Activated CD4-positive, alpha-beta T cell treated with anti-CD3 and anti-CD28 coated beads, Interleukin-2, amount 10 ng/mL, durations not matched to agents 24 days and 14 days (primary cell): ENCODE measurements at regions of chr10 and their contacts with region 1.

Region 1: GRCh38 chr10:100998991-100999741 is 442 bp upstream of the LZTS2 start:
- DNase-seq: peak; percentile 95
- H3K4me3 Mint-ChIP-seq: peak overlapping the region; percentile 83
- H3K27ac Mint-ChIP-seq: peak overlapping the region; percentile 86
- H3K4me1 Mint-ChIP-seq: peaks cover 22% of the 10 kb centered on the region
- H3K27me3 Mint-ChIP-seq: no peaks in the 10 kb centered on the region

Region 2: DNA sequence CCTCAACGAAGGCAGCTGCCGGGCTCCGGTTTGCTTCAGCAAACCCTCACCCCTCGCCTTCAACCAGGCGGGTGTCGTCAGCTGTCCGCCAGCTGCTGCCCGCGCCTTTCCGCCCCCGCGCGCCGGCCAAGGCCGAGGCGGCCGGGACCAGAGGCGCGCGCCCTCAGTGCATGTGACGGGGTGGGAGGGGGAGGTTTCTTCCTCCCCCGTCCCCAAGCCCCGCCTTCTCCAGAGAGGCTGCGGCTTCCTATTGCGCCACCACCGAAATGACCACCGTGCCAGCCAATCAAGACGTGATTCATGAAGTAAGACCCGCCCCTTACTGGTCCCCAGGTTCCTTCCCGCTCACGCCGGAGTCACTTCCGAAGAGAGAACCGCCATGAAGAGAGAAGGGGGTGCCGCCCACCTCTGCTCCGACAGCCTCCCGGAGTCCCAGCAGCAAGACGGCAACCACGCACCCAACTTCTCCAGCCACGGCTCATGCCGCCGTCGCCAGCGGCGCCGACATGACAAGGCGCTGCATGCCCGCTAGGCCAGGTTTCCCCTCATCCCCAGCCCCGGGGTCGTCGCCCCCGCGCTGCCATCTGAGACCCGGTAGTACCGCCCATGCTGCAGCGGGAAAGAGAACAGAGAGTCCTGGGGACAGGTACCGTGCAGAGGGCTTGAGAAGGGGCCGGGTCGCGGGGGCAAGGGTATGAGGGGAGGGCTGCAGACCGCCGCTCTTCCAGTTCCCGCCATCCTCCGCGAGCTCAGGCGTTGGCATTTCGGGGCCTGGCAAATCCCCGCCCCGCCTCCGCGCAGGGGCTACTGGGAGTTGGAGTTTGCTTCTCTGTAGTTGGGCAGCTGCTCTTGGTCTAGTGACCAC is 86.3 kb before region 1 on chr10 and contains the start of gene SLF2:
- intact Hi-C with region 1: loop called (anchors 1 kb)
- DNase-seq: peak; percentile 98
- H3K4me3 Mint-ChIP-seq: peak within 1 kb of the TSS; percentile 99
- H3K27ac Mint-ChIP-seq: peak within 1 kb of the TSS; percentile 98
- H3K4me1 Mint-ChIP-seq: peaks cover 40% of the 10 kb centered on the region
- H3K27me3 Mint-ChIP-seq: no peaks in the 10 kb centered on the region
- total RNA-seq, gene SLF2: 34.9 and 35.3 TPM in 2 replicates

Region 3: DNA sequence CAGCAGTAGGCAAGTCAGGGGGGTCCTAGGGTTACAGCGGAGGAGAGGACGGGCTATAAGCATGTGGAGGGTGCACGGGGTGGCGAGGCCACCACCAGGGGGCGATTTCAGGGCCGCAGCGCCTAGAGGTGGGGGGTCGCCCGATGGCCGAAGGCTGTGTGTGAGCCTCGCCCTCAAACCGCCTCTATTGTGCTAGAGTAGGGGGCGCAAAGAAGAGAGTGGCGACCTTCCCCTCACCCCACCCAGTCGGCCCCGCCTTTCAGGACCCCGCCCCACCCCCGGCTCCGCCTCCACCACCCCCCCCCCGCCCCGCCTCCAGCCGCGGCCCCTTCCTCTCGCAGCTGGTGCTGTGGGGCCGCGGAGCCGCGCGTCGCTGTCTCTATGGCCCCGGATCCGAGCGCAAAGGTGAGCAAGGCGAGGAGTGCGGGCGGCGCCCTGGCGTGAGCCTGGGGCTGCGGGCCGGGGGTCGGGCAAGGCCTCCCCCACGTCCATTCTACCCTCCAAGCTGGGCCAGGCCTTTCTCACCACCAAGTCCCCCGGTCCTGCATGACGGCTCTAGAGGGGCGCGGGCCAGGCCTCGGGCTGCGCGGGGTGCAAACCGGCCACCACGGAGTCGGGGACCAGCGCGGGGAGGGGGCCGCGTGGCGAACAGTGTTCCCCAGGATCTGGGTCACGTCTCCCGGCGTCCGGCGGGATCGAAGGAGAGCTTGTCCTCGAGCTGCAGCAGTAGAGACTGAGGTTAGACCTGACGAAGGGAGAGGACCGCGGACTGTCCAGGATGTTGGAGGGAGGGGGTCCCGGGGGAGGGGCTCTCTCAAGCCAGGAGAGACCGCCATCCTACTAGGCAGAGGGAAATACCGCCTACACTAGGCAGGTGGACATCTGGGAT is 29.7 kb before region 1 on chr10 and contains the start of gene SEMA4G:
- intact Hi-C with region 1: loop called (anchors 1 kb)
- DNase-seq: peak; percentile 82
- H3K4me3 Mint-ChIP-seq: peak within 1 kb of the TSS; percentile 72
- H3K27ac Mint-ChIP-seq: no peak within 1 kb of the TSS
- H3K4me1 Mint-ChIP-seq: peaks cover 6% of the 10 kb centered on the region
- H3K27me3 Mint-ChIP-seq: peaks cover 6% of the 10 kb centered on the region
- total RNA-seq, gene SEMA4G: 1.4 and 1.8 TPM in 2 replicates

Region 4: GRCh38 chr10:100986952-100987750 is 12.0 kb before region 1 on chr10 and contains the starts of genes MRPL43 and TWNK:
- intact Hi-C with region 1: loop called (anchors 1 kb)
- DNase-seq: peak; percentile 96
- H3K4me3 Mint-ChIP-seq: peak within 1 kb of the TSS; percentile 95
- H3K27ac Mint-ChIP-seq: peak within 1 kb of the TSS; percentile 85
- H3K4me1 Mint-ChIP-seq: peaks cover 27% of the 10 kb centered on the region
- H3K27me3 Mint-ChIP-seq: no peaks in the 10 kb centered on the region
- total RNA-seq, gene MRPL43: 53.4 and 59.5 TPM in 2 replicates
- total RNA-seq, gene TWNK: 41.1 and 42.1 TPM in 2 replicates

Region 5: GRCh38 chr10:101012525-101013364 is 13.6 kb after region 1 on chr10:
- intact Hi-C with region 1: loop called (anchors 1 kb)
- DNase-seq: peak; percentile 92
- H3K4me3 Mint-ChIP-seq: no peak overlapping the region
- H3K27ac Mint-ChIP-seq: peak overlapping the region; percentile 81
- H3K4me1 Mint-ChIP-seq: peaks cover 26% of the 10 kb centered on the region
- H3K27me3 Mint-ChIP-seq: peaks cover 28% of the 10 kb centered on the region

Region 6: DNA sequence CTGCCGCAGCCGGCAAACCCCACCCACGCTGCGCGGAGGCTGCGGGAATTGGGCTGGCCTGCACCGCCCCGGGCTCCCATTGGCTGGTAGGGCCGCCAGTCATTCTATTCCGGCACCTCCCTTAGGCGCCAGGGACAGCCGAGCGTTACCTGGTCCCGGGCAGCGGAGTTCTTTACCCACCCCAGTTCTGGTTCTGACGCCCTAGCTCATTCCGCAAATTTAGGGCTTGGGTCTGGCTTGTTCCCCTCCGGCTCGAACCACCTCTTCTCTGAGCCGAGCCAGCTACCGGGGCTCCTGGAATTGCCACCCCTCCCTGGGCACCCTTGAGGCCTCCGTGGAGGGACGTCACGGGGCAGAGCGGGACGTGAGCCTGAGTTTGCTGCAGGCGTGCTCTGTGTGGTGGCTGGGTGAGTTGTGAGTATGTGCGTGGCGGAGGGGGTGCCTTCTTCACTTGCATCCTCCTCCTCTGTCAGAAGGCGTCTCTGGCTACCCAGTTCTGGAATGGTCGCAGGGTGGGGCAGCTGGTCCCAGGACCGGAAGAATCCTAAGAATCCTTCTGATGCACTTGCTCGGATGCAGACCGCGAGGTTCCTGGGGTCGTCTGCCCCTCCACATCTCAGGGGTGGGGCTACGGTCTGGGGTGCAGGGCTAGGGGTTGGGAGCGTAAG is 32.1 kb after region 1 on chr10 and contains the starts of genes PDZD7 and SFXN3:
- intact Hi-C with region 1: loop called (anchors 1 kb)
- DNase-seq: peak; percentile 99
- H3K4me3 Mint-ChIP-seq: peak within 1 kb of the TSS; percentile 91
- H3K27ac Mint-ChIP-seq: peak within 1 kb of the TSS; percentile 91
- H3K4me1 Mint-ChIP-seq: peaks cover 26% of the 10 kb centered on the region
- H3K27me3 Mint-ChIP-seq: peaks cover 24% of the 10 kb centered on the region
- total RNA-seq, gene PDZD7: 0.38 and 0.93 TPM in 2 replicates
- total RNA-seq, gene SFXN3: 36.0 and 37.3 TPM in 2 replicates